HepG2 (cell line): ENCODE measurements at regions of chr6 and their contacts with region 1.

Region 1: GRCh38 chr6:47309291-47310130 is at the start of gene TNFRSF21:
- DNase-seq: peak; percentile 92
- ATAC-seq: peak; percentile 96
- H3K4me3 ChIP-seq: peak within 1 kb of the TSS; percentile 93 to 98 (median 95)
- H3K27ac ChIP-seq: peak within 1 kb of the TSS; percentile 63
- H3K4me1 ChIP-seq: peaks cover 45% of the 10 kb centered on the region
- H3K27me3 ChIP-seq: peaks cover 0 to 24% of the 10 kb centered on the region in 2 experiments; a peak in 2 of 5 replicates
- CTCF ChIP-seq: peak; percentile 98
- EP300 ChIP-seq: peak in 1 of 2 experiments; percentile 17; a peak in 1 of 4 replicates
- POLR2A ChIP-seq: peak; percentile 95 to 96
- RAD21 ChIP-seq: peak; percentile 98
- total RNA-seq, gene TNFRSF21: 35.4 and 46.3 TPM in 2 replicates

Region 2: DNA sequence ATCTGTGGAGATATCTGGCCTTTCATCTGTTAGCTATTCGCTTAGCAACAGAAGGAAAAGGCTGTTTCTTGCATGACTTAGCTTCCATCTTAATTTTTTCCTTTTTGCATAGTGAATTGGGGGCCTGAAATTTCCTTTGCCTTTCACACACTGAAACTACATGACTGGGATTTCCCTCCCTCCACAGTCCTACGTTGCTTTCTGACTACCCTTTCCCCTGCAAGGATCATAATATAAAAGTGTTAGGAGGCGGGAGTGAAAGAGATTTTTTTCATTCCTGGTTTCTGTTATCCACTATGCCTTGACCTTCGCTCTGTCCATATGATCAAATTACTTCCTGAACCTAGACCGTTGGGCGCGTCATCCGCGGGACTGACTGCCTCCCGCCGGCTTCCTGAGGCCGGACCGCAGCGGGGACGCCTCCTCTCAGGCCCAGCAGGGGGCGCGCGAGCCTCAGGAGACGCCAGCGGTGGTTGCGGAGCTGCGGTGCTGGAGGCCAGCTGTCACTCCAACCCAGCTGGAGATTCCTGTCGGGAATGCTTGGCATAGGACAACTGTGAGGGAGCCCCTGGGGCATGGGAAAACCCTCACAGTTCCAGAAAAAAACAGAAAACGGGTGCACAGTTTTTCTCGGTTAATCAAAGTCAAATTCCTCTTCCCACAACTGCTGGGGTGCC is 460.7 kb before region 1 on chr6:
- CTCF ChIA-PET with region 1: interaction called, 12 read pairs
- POLR2A ChIA-PET with region 1: no interaction called
- in situ Hi-C with region 1: loop called (anchors 25 kb)
- intact Hi-C with region 1: loop called (anchors 1 kb)
- DNase-seq: peak; percentile 71
- ATAC-seq: peak; percentile 100
- H3K4me3 ChIP-seq: peak overlapping the region; percentile 3 to 19 (median 6); a peak in 2 of 6 replicates
- H3K27ac ChIP-seq: no peak overlapping the region
- H3K4me1 ChIP-seq: peaks cover 9% of the 10 kb centered on the region
- H3K27me3 ChIP-seq: peaks cover 0 to 10% of the 10 kb centered on the region in 2 experiments; a peak in 1 of 5 replicates
- CTCF ChIP-seq: peak; percentile 100
- EP300 ChIP-seq: no peak
- POLR2A ChIP-seq: no peak
- RAD21 ChIP-seq: peak; percentile 97

Region 3: GRCh38 chr6:46993846-46994245 is 315.7 kb before region 1 on chr6:
- CTCF ChIA-PET with region 1: no interaction called
- POLR2A ChIA-PET with region 1: no interaction called
- in situ Hi-C with region 1: no loop called
- intact Hi-C with region 1: loop called (anchors 5 kb)
- DNase-seq: peak; percentile 28
- ATAC-seq: no peak
- H3K4me3 ChIP-seq: no peak overlapping the region
- H3K27ac ChIP-seq: no peak overlapping the region
- H3K4me1 ChIP-seq: peaks cover 8% of the 10 kb centered on the region; the same call in 1 of the 2 replicates
- H3K27me3 ChIP-seq: peaks cover 0 to 26% of the 10 kb centered on the region in 2 experiments; a peak in 2 of 5 replicates
- CTCF ChIP-seq: no peak
- EP300 ChIP-seq: no peak
- POLR2A ChIP-seq: no peak
- RAD21 ChIP-seq: no peak

Region 4: GRCh38 chr6:47073125-47074110 is 236.1 kb before region 1 on chr6:
- CTCF ChIA-PET with region 1: no interaction called
- POLR2A ChIA-PET with region 1: interaction called, 36 read pairs
- in situ Hi-C with region 1: no loop called
- intact Hi-C with region 1: loop called (anchors 5 kb)
- DNase-seq: peak; percentile 99
- ATAC-seq: peak; percentile 75
- H3K4me3 ChIP-seq: peak overlapping the region in 1 of 3 experiments; percentile 6; a peak in 1 of 6 replicates
- H3K27ac ChIP-seq: peak overlapping the region; percentile 93
- H3K4me1 ChIP-seq: peaks cover 73% of the 10 kb centered on the region
- H3K27me3 ChIP-seq: no peaks in the 10 kb centered on the region
- CTCF ChIP-seq: peak; percentile 77
- EP300 ChIP-seq: peak; percentile 98 to 100
- POLR2A ChIP-seq: no peak
- RAD21 ChIP-seq: peak; percentile 64

Region 5: GRCh38 chr6:47242483-47243386 is 66.8 kb before region 1 on chr6:
- CTCF ChIA-PET with region 1: no interaction called
- POLR2A ChIA-PET with region 1: no interaction called
- in situ Hi-C with region 1: loop called (anchors 5 kb)
- intact Hi-C with region 1: loop called (anchors 5 kb)
- DNase-seq: no peak
- ATAC-seq: no peak
- H3K4me3 ChIP-seq: no peak overlapping the region
- H3K27ac ChIP-seq: no peak overlapping the region
- H3K4me1 ChIP-seq: peaks cover 8% of the 10 kb centered on the region
- H3K27me3 ChIP-seq: no peaks in the 10 kb centered on the region
- CTCF ChIP-seq: no peak
- EP300 ChIP-seq: no peak
- POLR2A ChIP-seq: no peak
- RAD21 ChIP-seq: no peak

Region 6: GRCh38 chr6:47323321-47323720 is 13.8 kb after region 1 on chr6:
- CTCF ChIA-PET with region 1: no interaction called
- POLR2A ChIA-PET with region 1: no interaction called
- in situ Hi-C with region 1: no loop called
- intact Hi-C with region 1: no loop called
- DNase-seq: no peak
- ATAC-seq: no peak
- H3K4me3 ChIP-seq: no peak overlapping the region
- H3K27ac ChIP-seq: no peak overlapping the region
- H3K4me1 ChIP-seq: peaks cover 11% of the 10 kb centered on the region; the same call in 1 of the 2 replicates
- H3K27me3 ChIP-seq: peaks cover 0 to 11% of the 10 kb centered on the region in 2 experiments; a peak in 1 of 5 replicates
- CTCF ChIP-seq: no peak
- EP300 ChIP-seq: no peak
- POLR2A ChIP-seq: no peak
- RAD21 ChIP-seq: no peak